ENCODE measurements at regions of chr17 and their contacts with region 1.

Region 1: DNA sequence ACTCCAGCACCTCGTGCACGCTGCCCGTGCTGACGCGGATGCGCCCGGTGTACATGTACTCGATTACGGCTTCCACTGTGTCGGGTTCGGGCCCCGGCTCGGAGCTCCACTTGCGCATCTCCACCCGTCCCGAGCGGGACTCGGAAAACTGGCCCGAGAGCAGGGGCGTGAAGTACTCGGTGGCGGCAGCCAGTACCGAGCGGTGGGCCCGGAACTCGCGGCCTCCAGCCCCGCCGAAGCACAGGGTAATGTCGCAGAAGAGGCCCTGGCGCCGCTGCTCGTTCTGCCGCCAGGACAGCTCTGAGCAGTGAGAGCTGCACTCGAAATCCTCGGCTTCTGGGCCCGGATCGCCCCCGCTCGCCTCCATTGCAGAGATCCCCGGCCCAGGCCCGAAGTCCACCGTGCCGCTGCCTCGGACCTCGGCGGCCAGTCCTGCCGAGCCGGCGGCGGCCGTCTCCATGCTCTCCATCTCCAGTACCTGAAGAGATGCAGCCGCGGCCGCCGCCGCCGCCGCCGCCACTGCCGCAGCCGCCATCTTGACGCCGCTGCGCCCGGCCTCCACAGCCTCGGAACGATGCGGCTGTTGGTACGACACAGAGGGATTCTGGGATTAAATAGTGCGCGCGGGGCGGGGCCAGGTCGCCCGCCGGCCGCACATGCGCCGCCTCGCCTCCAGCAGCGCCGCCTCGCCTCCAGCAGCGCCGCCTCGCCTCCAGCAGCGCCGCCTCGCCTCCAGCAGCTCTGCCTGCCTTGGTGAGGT is at the start of gene KLHL11:
- DNase-seq: peak; percentile 92
- H3K4me3 Mint-ChIP-seq: no peak within 1 kb of the TSS
- H3K27ac Mint-ChIP-seq: peak within 1 kb of the TSS; percentile 47
- H3K4me1 Mint-ChIP-seq: peaks cover 29% of the 10 kb centered on the region
- H3K27me3 Mint-ChIP-seq: no peaks in the 10 kb centered on the region
- total RNA-seq, gene KLHL11: 8.9 to 9.6 TPM

Region 2: DNA sequence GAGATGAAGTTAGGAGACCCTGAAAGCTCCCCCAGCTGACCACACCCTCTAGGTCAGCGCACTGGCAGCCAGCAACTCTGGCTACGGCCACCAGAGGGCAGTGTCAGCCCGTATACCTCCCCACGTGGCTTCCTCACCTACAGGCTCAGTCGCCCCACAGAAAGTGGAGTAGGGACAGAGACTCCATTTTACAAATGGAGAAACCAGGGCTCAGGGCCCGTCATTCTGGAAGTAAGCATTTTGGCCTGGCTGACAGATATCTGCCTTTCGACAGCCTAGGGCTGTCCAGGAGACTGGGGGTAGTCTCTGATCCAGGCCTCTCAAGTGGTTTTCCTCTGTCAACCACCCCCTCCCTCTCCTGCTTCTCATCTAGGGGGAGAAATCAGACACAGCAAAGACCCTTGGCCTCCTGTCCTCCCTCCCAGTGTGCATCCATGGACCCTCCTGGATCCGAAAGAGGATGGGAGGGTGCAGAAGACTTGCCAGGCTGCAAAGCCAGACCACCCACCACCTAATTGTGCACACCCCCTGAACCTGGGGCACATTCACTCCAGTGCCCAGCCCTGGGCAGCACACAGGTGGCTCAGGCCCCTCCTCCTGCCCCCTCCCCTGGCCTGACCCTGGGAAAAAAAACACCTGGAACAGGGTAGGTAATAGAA is 126.8 kb before region 1 on chr17:
- CTCF ChIA-PET with region 1: no interaction called
- intact Hi-C with region 1: loop called (anchors 10 kb)
- DNase-seq: peak; percentile 91
- H3K4me3 Mint-ChIP-seq: no peak overlapping the region
- H3K27ac Mint-ChIP-seq: no peak overlapping the region
- H3K4me1 Mint-ChIP-seq: peaks cover 2% of the 10 kb centered on the region
- H3K27me3 Mint-ChIP-seq: peaks cover 29% of the 10 kb centered on the region

Region 3: DNA sequence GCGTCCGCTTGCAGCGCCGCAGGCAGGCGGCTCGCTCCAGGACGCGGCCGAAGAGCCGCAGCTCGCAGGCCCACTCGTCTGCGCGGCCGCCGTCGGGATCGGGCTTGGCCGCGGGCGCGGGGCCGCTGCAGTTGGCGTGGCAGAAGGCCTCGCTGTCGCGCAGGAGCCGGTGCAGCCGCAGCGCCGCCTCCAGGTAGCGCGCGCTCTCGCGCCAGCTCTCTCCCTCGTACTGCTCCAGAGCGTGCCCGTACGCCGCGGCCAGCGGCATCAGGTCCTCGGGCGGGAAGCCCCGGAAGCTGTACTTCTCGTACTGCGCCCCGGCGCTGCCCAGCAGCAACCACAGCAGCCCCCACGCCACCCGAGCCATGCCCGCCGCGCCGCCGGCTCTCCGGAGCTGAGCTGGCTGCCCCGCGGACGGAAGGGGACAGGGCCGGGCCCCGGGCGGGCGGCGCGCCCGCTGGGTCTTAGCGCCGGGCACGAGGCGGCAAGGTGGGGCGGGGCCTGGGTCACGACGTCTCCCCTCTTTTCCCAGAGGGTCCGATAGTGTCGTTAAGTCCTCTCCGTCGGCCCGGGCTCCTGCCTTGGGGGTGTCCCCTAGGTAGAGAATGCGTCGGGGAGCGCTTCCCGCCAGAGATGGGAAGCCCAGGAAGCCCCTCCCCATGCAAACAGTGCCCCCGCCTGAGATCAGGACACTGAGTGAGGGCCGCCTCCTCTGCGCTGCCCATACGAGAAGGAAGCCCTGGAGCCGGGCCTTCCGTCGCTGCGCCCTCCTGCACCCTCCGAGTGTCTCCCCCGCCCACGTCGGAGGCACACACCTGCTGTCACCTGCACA is 53.3 kb before region 1 on chr17 and contains the start of gene P3H4:
- CTCF ChIA-PET with region 1: interaction called, 10 read pairs
- intact Hi-C with region 1: loop called (anchors 2 kb)
- DNase-seq: peak; percentile 76
- H3K4me3 Mint-ChIP-seq: peak within 1 kb of the TSS; percentile 75
- H3K27ac Mint-ChIP-seq: no peak within 1 kb of the TSS
- H3K4me1 Mint-ChIP-seq: peaks cover 18% of the 10 kb centered on the region
- H3K27me3 Mint-ChIP-seq: peaks cover 10% of the 10 kb centered on the region
- total RNA-seq, gene P3H4: 1.2 to 1.5 TPM

Region 4: DNA sequence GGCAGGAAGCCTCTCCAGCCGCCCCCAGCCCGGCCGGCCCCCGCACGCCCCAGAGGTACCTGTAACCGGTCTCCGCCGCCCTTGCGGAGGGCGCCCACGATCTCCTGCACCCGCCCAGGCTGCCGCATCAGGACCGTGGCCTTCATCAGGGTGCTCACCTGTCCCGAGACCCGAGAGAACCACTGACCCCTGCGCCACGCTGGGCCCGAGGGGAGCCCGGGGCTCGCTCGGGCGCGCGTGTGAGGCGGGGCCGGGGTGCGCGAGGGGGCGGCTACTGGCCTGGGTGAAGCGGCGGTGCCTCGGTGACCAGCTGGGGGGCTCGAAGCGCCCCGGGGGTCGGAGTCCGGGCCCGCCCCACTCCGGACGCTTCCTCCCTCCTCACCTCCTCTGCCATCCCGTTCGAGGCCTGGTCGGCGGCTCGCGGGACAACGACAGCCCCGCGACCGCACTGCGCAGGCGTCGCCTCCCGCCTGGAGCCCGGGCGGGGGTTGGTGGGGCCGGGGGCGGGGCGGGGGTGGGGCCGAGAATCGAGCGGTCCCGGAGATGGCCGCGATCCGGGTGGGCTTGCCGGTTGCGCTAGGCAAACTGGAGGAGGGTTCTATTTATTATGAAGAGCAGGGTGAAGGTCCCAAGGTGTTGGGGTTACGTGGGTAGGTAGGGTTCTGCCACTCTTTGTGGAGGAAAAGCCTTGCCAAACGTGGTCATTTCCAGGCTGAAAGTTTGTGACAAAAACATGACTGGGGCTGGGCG is 29.0 kb before region 1 on chr17 and contains the start of gene NT5C3B:
- CTCF ChIA-PET with region 1: interaction called, 4 read pairs
- intact Hi-C with region 1: loop called (anchors 2 kb)
- DNase-seq: peak; percentile 52
- H3K4me3 Mint-ChIP-seq: peak within 1 kb of the TSS; percentile 80
- H3K27ac Mint-ChIP-seq: peak within 1 kb of the TSS; percentile 8
- H3K4me1 Mint-ChIP-seq: peaks cover 16% of the 10 kb centered on the region
- H3K27me3 Mint-ChIP-seq: no peaks in the 10 kb centered on the region
- total RNA-seq, gene NT5C3B: 25.9 to 28.1 TPM

Region 5: DNA sequence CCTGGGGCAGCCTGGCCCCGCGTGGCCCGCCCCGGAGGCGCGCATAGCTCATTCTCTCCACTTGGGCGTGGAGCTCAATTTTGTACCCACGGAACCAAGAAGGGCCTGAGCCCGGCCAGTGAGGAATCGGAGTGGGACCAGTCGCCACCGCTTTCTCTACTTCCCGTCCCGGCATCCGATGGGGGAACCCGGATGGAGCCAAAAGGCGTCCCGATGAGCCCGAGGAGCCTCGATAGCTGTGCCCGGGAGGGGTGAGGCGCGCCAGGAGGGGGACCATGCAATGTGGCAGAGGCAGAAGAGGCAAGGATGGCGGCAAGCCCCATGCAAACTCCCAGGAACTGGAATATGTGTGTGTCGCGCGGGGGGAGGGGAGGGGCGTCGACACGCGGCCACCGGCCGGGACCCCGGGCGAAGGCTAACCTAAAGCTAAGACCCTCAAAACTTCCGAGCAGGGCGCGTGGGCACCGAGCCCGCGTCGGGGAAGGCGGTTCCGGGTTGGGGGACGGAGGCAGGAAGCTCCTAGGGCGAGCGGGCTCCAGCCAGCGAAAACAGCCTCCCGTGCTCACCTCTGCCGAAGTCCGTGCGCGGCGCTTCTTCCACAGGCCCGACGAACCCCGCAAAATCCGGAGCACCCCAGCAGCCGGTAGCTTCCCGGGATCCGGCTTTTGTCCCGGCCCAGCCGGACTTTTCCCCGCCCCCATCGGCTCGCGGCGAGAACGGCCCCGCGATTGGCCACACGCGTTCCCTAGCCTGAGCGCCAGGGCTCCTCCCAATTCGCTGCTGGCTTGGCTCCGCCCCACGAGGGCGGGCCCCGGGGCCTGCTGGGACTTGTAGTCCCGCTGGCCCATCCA is 53.5 kb after region 1 on chr17 and contains the start of gene ACLY:
- CTCF ChIA-PET with region 1: no interaction called
- intact Hi-C with region 1: loop called (anchors 1 kb)
- DNase-seq: peak; percentile 96
- H3K4me3 Mint-ChIP-seq: peak within 1 kb of the TSS; percentile 94
- H3K27ac Mint-ChIP-seq: peak within 1 kb of the TSS; percentile 82
- H3K4me1 Mint-ChIP-seq: peaks cover 39% of the 10 kb centered on the region
- H3K27me3 Mint-ChIP-seq: no peaks in the 10 kb centered on the region
- total RNA-seq, gene ACLY: 153 to 161 TPM

Region 6: DNA sequence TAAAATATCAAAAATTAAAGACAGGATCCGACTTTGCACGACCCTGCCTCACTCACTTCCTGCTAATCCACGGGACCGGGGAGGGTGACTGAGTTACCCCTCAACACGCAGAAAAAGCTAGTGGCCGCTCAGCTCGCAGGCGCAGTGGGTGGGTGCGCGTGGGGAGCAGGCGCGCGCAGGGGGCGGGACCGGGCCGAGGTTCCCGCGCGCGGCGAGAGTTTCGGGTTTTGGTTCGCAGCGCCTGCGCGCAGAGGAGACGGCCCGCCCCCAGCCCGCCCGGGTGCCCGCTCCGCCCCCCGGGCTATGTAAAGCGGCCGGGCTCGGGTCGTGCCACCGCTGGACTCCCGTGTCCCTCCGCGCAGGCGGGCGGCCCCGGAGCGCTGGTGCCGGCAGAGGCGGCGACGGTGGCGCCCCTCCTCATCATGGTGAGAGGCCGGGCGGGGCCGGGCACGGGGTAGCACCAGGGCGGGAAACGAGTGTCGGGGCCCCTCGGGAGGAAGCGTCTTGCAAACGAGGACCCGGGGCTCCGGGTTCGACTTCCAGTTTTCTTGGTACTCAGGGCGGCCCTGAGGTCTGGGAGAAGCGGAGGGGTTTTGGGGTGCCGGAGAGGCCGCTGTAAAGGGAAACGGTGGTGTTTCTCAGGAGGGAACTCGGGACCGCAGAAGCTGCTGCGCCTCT is 101.6 kb after region 1 on chr17 and contains the start of gene CNP:
- CTCF ChIA-PET with region 1: no interaction called
- intact Hi-C with region 1: loop called (anchors 2 kb)
- DNase-seq: peak; percentile 88
- H3K4me3 Mint-ChIP-seq: peak within 1 kb of the TSS; percentile 80
- H3K27ac Mint-ChIP-seq: peak within 1 kb of the TSS; percentile 86
- H3K4me1 Mint-ChIP-seq: peaks cover 38% of the 10 kb centered on the region
- H3K27me3 Mint-ChIP-seq: no peaks in the 10 kb centered on the region
- total RNA-seq, gene CNP: 58.4 to 59.1 TPM

Region 7: GRCh38 chr17:42276359-42276608 is 411.3 kb after region 1 on chr17 and contains the start of gene STAT5B:
- CTCF ChIA-PET with region 1: no interaction called
- intact Hi-C with region 1: loop called (anchors 10 kb)
- DNase-seq: peak; percentile 62
- H3K4me3 Mint-ChIP-seq: peak within 1 kb of the TSS; percentile 96
- H3K27ac Mint-ChIP-seq: peak within 1 kb of the TSS; percentile 97
- H3K4me1 Mint-ChIP-seq: peaks cover 35% of the 10 kb centered on the region
- H3K27me3 Mint-ChIP-seq: no peaks in the 10 kb centered on the region
- total RNA-seq, gene STAT5B: 185 to 192 TPM